Head of caudate nucleus (tissue), 42 donors: ENCODE measurements at regions of chr2 and their contacts with region 1.

Region 1: DNA sequence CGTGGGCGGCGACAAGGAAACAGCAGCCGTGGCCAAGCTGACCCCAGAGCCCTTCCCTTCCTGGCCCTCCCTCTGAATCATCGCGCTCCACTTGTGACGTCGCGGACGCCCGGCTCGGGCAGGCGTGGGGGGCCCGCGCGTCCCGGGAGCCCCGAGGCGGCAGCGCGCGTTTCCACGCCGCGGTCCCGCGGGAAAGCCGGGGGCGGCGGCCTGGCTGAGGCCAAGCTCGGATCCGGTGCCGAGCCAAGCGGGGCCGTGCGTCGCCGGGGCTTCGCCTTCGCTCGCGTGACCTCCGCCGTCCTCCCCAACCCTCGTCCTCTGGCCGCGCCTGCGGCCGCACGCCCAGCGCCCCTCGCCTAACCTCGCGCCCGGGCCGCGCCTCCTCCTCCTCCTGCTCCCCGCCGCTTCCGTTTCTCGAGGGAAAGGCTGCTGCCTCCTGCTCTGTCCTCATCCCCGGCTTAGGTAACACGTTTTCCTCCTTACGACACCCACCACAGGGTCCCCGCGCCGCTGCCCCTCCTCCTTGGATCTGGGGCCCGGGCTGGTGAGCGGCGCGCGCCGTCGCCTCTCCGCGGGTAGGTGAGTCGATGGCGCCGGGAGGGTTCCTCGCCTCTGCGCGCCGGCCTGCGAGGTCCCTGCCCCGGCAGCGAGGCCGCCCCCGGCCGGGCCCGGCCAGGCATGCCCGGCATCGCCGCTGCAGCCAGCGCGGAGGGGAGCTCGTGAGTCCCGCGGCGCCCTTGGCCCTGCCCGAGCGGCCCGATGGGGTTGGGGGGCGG is at the start of gene INPP1:
- DNase-seq: peak; percentile 22 to 83 (median 64)

Region 2: DNA sequence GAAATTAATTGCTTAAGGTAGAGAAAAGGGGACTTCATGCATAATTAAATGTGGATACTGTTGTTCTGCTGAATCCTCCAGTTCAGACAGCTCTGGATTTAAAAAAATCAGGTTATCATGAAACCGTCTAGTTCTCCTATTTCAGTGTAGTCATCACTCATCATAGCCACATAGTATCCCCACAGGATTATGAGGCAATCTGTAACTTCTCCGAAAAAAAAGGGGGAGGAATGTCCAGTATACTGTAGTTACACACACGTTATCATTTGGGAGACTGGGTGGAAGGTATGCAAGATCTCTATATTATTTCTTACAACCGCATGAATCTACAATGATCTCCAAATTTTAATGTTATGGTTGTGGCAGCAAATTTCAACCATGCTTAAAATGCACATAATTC is 138.0 kb before region 1 on chr2:
- intact Hi-C with region 1: no loop called
- DNase-seq: no peak

Region 3: GRCh38 chr2:190468814-190469569 is 125.3 kb after region 1 on chr2:
- intact Hi-C with region 1: no loop called
- DNase-seq: peak in 31 of 42 donors; percentile 21 to 82 (median 50)

Region 4: DNA sequence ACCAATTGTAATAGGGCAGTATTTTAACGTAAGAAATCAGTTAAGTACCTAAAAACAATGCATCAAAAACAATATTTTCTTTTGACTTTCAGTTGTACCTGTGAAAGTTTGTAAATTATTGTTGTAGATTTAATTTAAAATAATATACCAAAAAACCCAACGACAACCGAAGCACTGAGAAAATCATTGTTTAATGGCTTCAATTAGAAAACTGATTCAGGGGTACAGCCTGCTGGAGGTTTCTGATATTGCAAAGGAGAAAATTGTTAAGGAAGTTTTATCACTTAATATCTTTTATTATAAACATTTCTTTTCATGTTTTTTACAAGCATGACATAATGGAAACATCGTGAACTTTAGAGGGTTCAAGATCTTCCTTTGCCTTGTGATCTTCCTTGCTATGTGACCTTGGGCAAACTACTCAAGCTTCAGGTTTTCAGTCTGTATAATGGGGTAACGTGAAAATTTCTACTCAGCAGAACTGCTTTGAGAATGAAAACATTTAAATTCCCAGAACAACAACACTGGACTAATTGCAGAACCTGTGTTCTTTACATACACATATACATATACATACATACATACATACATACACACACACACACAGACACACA is 460.6 kb after region 1 on chr2:
- intact Hi-C with region 1: loop called (anchors 10 kb)
- DNase-seq: peak in 9 of 42 donors; percentile 4 to 59 (median 19)